HepG2 (cell line): ENCODE measurements at regions of chr14 and their contacts with region 1.

Region 1: GRCh38 chr14:96100161-96101029 is 61.2 kb downstream of the C14orf132 start:
- DNase-seq: peak; percentile 60
- ATAC-seq: peak; percentile 57
- H3K4me3 ChIP-seq: no peak overlapping the region
- H3K27ac ChIP-seq: no peak overlapping the region
- H3K4me1 ChIP-seq: peaks cover 46% of the 10 kb centered on the region
- H3K27me3 ChIP-seq: no peaks in the 10 kb centered on the region; a peak in 1 of 5 replicates
- CTCF ChIP-seq: peak; percentile 90
- EP300 ChIP-seq: no peak
- POLR2A ChIP-seq: no peak
- RAD21 ChIP-seq: peak; percentile 90

Region 2: GRCh38 chr14:96051642-96052540 is 48.5 kb before region 1 on chr14:
- CTCF ChIA-PET with region 1: no interaction called
- POLR2A ChIA-PET with region 1: no interaction called
- in situ Hi-C with region 1: no loop called
- intact Hi-C with region 1: loop called (anchors 2 kb)
- DNase-seq: peak; percentile 33
- ATAC-seq: peak; percentile 82
- H3K4me3 ChIP-seq: no peak overlapping the region
- H3K27ac ChIP-seq: no peak overlapping the region
- H3K4me1 ChIP-seq: no peaks in the 10 kb centered on the region
- H3K27me3 ChIP-seq: peaks cover 0 to 7% of the 10 kb centered on the region in 2 experiments; a peak in 2 of 5 replicates
- CTCF ChIP-seq: peak; percentile 57
- EP300 ChIP-seq: no peak
- POLR2A ChIP-seq: no peak
- RAD21 ChIP-seq: no peak

Region 3: DNA sequence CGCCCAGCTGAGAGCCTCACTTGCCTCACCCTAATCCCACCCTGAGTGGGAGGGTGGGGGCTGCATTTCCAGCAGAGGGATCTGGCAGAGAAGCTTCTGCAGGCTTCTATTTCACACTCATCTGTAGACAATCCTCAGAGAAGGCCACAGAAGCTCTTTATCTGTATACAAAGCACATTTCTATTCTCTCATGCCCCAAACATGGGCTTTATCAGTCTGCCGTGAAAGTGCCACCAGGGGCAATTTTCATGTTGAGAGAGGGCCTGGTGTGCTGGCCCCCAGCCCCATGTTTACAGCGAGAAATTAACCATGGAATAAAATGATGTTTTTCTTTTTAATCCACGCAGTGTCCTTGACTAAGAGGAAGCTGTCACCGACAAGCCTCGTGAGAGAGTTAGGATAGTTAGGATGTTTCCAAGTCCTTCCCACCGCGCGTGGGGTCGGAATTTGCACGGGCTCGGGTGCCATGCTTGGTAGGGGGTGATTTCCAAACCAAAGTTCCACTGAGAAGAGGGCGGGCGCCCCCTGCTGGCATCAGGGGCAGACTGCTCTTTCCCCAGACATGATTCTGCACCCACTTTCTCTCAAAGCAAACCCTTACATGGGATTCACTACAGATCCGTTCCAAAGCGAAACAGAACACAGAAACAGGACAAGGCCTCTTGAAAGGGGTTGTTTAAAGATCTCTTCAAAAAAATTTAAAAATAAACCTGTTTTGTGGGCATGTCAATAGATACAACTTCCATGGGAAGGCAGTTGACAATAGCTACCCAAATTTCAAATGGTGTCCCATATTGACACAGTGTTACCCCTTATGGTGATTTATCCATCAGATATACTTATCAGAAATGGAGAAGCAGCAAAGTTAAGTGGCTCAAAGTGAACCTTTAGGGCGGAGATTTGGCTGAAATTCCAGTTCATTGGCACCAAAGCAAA is 175.1 kb after region 1 on chr14:
- CTCF ChIA-PET with region 1: interaction called, 93 read pairs
- POLR2A ChIA-PET with region 1: no interaction called
- in situ Hi-C with region 1: loop called (anchors 5 kb)
- intact Hi-C with region 1: loop called (anchors 1 kb)
- DNase-seq: peak; percentile 44
- ATAC-seq: peak; percentile 79
- H3K4me3 ChIP-seq: no peak overlapping the region
- H3K27ac ChIP-seq: no peak overlapping the region
- H3K4me1 ChIP-seq: no peaks in the 10 kb centered on the region
- H3K27me3 ChIP-seq: no peaks in the 10 kb centered on the region
- CTCF ChIP-seq: peak; percentile 88
- EP300 ChIP-seq: no peak
- POLR2A ChIP-seq: no peak
- RAD21 ChIP-seq: peak; percentile 77; the same call in 1 of the 2 replicates